Psoas muscle (tissue), 8 donors: ENCODE measurements at regions of chr5 and their contacts with region 1.

Region 1: GRCh38 chr5:73591102-73591695 is 25.7 kb downstream of the UTP15 start:
- DNase-seq: no peak
- ATAC-seq: peak; percentile 76 to 90 (median 78)
- H3K4me3 ChIP-seq: no peak overlapping the region
- H3K27ac ChIP-seq: no peak overlapping the region
- H3K4me1 ChIP-seq: no peaks in the 10 kb centered on the region
- H3K27me3 ChIP-seq: no peaks in the 10 kb centered on the region
- CTCF ChIP-seq: peak; percentile 91

Region 2: DNA sequence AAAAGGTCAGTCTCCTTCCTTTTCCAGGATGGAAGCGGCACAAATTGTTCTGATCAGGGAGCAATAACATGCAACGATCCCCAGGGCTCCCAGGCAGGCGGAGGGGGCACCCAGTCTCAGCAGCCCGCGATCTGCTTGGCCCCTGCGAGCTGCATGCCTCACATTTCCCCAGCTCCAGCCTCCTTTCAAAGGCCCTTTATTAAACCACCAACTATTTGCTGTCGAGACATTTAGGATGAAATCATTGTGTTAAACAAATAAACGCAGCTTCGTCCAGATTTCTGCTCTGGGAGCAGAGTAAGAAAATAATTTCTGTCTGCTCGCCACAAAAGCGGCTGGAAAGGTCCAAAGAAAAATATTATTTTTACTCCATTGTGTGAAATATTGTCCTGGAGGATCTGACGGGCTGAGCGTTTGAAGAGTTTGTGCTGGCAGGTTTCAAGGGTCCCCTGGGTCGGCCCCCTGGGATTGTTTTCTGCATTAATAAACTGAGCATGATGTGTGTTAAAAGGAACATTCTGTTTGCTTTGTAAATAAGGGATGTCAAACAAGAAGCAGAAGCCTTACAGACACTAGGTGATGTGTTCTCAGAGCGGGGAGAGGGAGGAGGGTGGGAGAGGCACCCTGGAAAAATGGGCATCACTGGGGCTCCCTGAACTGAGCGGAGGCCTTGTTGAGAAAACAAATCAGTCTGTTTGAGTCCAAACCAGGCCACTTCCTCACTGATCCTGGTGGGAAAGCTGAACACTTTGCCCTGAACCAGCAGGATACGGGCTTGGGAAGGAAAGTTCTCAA is 252.7 kb before region 1 on chr5:
- intact Hi-C with region 1: no loop called
- DNase-seq: no peak
- ATAC-seq: no peak
- H3K4me3 ChIP-seq: no peak overlapping the region
- H3K27ac ChIP-seq: no peak overlapping the region
- H3K4me1 ChIP-seq: no peaks in the 10 kb centered on the region
- H3K27me3 ChIP-seq: peaks cover 13 to 45% (median 16%) of the 10 kb centered on the region in 3 donors
- CTCF ChIP-seq: no peak

Region 3: DNA sequence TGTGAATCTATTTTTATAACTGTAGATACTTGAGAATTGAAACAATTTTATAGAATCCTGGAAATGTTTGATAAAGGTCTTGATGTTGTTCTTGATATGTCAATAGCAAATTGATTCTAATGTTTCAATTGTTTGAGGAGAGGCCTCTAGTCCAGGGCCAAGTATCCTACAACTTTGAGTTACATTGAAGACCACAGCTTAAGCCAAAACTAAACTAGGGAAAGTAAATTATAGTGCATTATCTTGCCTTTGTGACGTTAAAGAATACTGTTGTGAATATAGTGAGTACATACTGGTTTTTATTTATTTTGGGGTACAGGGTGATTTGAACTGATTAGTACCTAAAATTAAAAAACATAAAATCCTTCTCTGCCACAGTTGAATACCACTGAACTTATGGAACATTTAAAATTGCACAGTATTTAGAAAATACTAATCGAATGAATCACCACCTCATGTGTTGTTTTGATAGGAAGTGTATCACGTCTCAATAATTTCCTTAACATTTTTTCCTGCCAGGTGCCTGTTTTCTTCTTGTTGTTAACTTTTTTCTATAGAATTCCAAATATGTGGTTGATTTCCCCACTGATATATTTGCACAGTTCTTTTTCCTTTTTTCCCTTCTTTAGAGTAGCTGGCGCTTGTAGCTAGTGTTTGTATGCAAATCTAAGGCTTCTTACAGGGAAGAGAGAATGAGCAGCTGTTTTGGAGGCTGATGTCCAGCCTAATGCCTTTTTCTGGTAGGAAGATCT is 47.3 kb after region 1 on chr5:
- intact Hi-C with region 1: no loop called
- DNase-seq: no peak
- ATAC-seq: no peak
- H3K4me3 ChIP-seq: no peak overlapping the region
- H3K27ac ChIP-seq: no peak overlapping the region
- H3K4me1 ChIP-seq: no peaks in the 10 kb centered on the region
- H3K27me3 ChIP-seq: no peaks in the 10 kb centered on the region
- CTCF ChIP-seq: no peak

Region 4: DNA sequence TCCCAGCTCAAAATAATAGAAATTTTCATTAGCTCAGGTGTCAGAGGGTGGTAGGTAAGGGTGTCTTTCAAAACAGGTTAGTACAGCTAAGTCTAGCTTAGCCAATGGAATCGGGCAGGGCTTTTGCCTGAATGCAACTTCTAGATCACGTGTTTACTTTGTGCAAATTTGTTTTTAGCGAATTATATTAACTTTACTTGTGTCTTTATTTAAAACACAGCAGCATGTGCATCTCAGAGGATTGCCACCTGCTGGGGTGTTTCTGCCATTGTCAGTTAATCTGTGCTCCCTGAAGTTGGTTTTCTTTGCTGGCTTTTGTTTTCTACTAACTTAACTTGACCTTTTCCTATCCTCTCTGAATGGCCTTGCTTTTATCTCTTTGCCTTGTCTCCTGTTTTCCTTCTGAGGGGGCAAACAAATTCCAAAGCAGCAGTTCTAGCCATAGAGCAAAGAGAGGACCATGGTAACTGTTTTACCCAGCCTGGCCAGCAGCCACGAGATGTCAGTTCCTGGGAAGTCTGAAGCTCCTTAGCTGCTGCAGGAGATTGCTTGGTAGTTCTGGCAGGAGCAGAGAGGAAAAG is 102.4 kb after region 1 on chr5:
- intact Hi-C with region 1: loop called in 1 of 2 experiments (anchors 5 kb)
- DNase-seq: no peak
- ATAC-seq: no peak
- H3K4me3 ChIP-seq: no peak overlapping the region
- H3K27ac ChIP-seq: no peak overlapping the region
- H3K4me1 ChIP-seq: no peaks in the 10 kb centered on the region
- H3K27me3 ChIP-seq: no peaks in the 10 kb centered on the region
- CTCF ChIP-seq: peak; percentile 20

Region 5: GRCh38 chr5:73792687-73793320 is 201.6 kb after region 1 on chr5:
- intact Hi-C with region 1: loop called (anchors 1 to 2 kb)
- DNase-seq: peak; percentile 61 to 75
- ATAC-seq: peak; percentile 74 to 89 (median 86)
- H3K4me3 ChIP-seq: no peak overlapping the region
- H3K27ac ChIP-seq: no peak overlapping the region
- H3K4me1 ChIP-seq: peaks cover 5% of the 10 kb centered on the region
- H3K27me3 ChIP-seq: no peaks in the 10 kb centered on the region
- CTCF ChIP-seq: peak; percentile 98